Natural killer cell (primary cell): ENCODE measurements at regions of chr12 and their contacts with region 1.

Region 1: DNA sequence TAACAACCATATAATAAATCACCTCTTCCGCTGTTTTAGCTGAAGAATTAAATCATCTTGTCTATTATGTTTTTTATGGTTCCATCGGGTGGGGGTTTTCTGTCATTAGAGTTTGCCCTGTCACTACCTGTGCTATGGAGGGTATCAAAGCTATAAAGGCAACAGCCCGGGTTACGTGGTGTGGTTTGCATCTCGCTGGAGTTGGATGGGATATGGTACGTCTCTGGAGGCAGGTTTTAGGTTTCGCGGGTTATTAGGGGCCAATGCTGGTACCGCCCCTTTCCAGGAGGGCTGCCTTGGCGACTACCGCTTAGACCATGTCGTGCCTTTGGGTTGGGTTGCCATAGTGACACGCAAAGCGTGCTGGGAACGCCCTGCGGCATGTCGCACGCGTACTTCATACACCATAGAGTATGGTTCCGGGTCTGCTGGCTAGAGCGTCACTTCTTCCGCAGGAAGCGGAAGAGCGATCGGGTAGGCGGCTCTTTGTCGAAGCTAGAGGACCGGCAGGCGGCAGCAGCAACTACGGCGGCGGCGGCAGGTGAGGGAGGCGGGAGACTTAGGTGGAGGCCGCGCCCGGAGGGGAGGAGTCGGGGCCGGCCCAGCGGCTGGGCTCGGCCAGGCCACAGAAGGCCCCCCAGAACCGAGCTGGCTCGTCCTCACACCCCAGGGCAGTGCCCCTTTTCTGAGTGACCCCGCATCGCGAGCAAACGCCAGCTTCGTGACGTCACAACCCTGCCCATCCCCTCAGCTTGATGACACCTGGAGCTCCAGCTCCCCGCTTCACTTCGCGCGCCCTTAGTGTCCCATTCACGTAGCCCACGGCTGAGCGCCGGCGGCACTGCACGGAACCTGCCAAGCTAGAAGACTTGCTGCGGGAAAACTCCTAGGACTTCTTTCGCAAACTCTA is at the start of gene ZC3H10:
- DNase-seq: peak; percentile 93 to 99
- ATAC-seq: peak; percentile 78 to 93 (median 82)
- H3K4me3 ChIP-seq: peak within 1 kb of the TSS; percentile 78
- H3K4me3 Mint-ChIP-seq: peak within 1 kb of the TSS; percentile 98
- H3K27ac ChIP-seq: peak within 1 kb of the TSS; percentile 90
- H3K27ac Mint-ChIP-seq: peak within 1 kb of the TSS; percentile 95 to 99
- H3K4me1 ChIP-seq: peaks cover 28% of the 10 kb centered on the region
- H3K4me1 Mint-ChIP-seq: peaks cover 33% of the 10 kb centered on the region in 2 donors
- H3K27me3 ChIP-seq: no peaks in the 10 kb centered on the region
- H3K27me3 Mint-ChIP-seq: no peaks in the 10 kb centered on the region
- CTCF ChIP-seq: peak; percentile 47
- total RNA-seq, gene ZC3H10: 12.0 to 24.3 (median 16.2) TPM

Region 2: DNA sequence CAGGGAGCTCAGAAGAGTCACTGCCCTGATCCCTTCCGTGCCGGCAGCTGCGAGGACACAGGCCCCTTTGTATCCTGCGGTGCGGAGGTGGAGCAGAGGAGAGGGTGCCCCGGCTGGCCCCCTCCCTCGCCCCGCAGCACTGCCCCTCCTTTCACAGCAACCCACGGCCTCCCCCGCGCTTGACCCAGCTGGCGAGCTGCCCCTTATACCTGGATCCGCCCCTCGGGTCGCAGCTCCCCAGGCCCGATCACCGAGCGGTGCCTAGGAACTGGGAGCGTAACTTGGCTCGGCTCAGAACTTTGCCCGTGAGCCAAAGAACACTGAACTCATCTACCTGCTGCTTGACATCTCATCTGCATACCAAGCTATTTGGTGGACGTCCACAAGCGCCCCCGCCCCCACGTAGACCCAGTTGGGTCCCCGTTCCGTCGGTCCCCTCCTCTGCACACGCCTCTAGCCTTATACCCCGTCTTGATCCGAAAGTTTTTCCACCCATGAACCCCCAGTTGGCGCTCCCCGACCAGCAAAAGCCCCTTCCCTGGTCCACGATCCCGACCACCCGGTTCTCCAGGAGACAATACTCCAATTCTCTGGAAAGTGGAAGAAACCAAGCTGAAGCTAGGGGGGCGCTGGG is 287.9 kb before region 1 on chr12:
- intact Hi-C with region 1: loop called (anchors 1 kb)
- DNase-seq: peak; percentile 28 to 59
- ATAC-seq: peak in 1 of 3 donors; percentile 11
- H3K4me3 ChIP-seq: peak overlapping the region; percentile 68
- H3K4me3 Mint-ChIP-seq: peak overlapping the region; percentile 99
- H3K27ac ChIP-seq: peak overlapping the region; percentile 61
- H3K27ac Mint-ChIP-seq: peak overlapping the region; percentile 91 to 95
- H3K4me1 ChIP-seq: peaks cover 49% of the 10 kb centered on the region
- H3K4me1 Mint-ChIP-seq: peaks cover 44 to 56% of the 10 kb centered on the region in 2 donors
- H3K27me3 ChIP-seq: no peaks in the 10 kb centered on the region
- H3K27me3 Mint-ChIP-seq: no peaks in the 10 kb centered on the region
- CTCF ChIP-seq: no peak

Region 3: GRCh38 chr12:56041552-56042429 is 76.2 kb before region 1 on chr12 and contains the start of gene RPS26:
- intact Hi-C with region 1: loop called (anchors 5 kb)
- DNase-seq: peak; percentile 85 to 99
- ATAC-seq: peak; percentile 89 to 97 (median 93)
- H3K4me3 ChIP-seq: peak within 1 kb of the TSS; percentile 83
- H3K4me3 Mint-ChIP-seq: peak within 1 kb of the TSS; percentile 99
- H3K27ac ChIP-seq: peak within 1 kb of the TSS; percentile 86
- H3K27ac Mint-ChIP-seq: peak within 1 kb of the TSS; percentile 93 to 98
- H3K4me1 ChIP-seq: peaks cover 14% of the 10 kb centered on the region
- H3K4me1 Mint-ChIP-seq: peaks cover 24 to 25% of the 10 kb centered on the region in 2 donors
- H3K27me3 ChIP-seq: no peaks in the 10 kb centered on the region
- H3K27me3 Mint-ChIP-seq: no peaks in the 10 kb centered on the region
- CTCF ChIP-seq: no peak
- total RNA-seq, gene RPS26: 29.5 to 50.3 (median 35.5) TPM

Region 4: GRCh38 chr12:56127888-56128669 is 10.0 kb after region 1 on chr12 and contains the start of gene ESYT1:
- intact Hi-C with region 1: loop called (anchors 1 kb)
- DNase-seq: peak; percentile 91 to 100
- ATAC-seq: peak; percentile 87 to 96 (median 90)
- H3K4me3 ChIP-seq: peak within 1 kb of the TSS; percentile 90
- H3K4me3 Mint-ChIP-seq: peak within 1 kb of the TSS; percentile 97
- H3K27ac ChIP-seq: peak within 1 kb of the TSS; percentile 85
- H3K27ac Mint-ChIP-seq: peak within 1 kb of the TSS; percentile 88 to 93
- H3K4me1 ChIP-seq: peaks cover 45% of the 10 kb centered on the region
- H3K4me1 Mint-ChIP-seq: peaks cover 52 to 68% of the 10 kb centered on the region in 2 donors
- H3K27me3 ChIP-seq: no peaks in the 10 kb centered on the region
- H3K27me3 Mint-ChIP-seq: no peaks in the 10 kb centered on the region
- CTCF ChIP-seq: no peak
- total RNA-seq, gene ESYT1: 198 to 215 (median 199) TPM

Region 5: DNA sequence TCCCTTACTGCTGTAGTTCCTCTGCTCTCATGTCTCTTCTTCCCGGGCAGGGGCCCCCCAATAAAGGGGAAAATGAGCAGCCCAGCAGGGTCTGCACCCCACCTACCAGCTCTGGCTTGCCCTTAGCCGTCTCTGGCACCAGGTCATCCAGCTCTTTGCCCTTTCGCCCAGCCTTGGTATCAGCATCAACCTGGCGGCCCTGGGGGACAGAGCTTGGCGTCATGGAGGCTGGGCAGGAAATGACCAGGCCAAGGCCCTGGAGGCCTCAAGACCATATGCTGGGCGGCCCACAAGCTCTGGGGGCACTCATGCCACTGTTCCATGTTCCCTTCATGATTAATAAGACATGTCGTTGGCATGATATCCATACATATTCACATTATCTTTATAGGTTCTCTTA is 54.8 kb after region 1 on chr12:
- intact Hi-C with region 1: no loop called
- DNase-seq: no peak
- ATAC-seq: no peak
- H3K4me3 ChIP-seq: no peak overlapping the region
- H3K4me3 Mint-ChIP-seq: no peak overlapping the region
- H3K27ac ChIP-seq: no peak overlapping the region
- H3K27ac Mint-ChIP-seq: no peak overlapping the region
- H3K4me1 ChIP-seq: no peaks in the 10 kb centered on the region
- H3K4me1 Mint-ChIP-seq: no peaks in the 10 kb centered on the region
- H3K27me3 ChIP-seq: no peaks in the 10 kb centered on the region
- H3K27me3 Mint-ChIP-seq: no peaks in the 10 kb centered on the region
- CTCF ChIP-seq: no peak

Region 6: DNA sequence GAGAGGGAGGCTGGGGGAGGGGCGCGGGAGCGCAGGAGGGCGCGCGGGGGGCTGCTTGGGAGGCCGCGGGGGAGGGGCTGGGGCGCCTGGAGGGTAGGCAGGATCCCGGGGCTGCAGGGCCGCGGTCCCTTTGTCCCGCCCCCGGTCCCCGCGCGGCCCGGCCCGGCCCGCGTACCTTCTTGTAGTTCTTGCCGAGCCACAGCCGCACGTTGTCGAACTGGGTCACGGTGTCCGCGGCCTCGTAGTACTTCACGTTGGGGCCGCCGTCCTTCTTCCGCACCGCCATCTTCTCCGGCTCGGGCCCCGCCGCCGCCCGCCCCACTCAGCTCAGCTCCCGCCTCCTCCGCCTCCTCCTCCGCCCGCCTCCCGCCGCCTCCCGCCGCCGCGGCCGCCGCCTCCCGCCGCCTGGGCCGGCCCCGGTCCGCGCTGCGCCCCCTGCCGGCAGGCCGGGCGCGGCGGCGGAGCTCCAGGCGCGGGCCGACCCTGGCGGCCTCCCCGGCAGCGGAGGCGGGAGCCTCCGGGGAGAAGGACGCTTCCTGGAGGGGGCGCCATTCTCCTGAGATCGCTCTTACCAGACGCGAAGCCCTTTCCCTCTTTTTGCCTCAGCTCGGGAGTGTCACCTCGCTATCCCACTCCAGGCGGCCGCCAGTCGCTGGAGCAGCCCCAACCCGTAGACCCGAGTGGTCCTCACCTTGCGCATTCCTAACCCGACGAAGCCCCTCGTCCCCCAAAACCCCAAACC is 71.3 kb after region 1 on chr12 and contains the start of gene SMARCC2:
- intact Hi-C with region 1: loop called (anchors 2 kb)
- DNase-seq: peak; percentile 83 to 94
- ATAC-seq: peak; percentile 81 to 94 (median 83)
- H3K4me3 ChIP-seq: peak within 1 kb of the TSS; percentile 96
- H3K4me3 Mint-ChIP-seq: peak within 1 kb of the TSS; percentile 99
- H3K27ac ChIP-seq: peak within 1 kb of the TSS; percentile 96
- H3K27ac Mint-ChIP-seq: peak within 1 kb of the TSS; percentile 98
- H3K4me1 ChIP-seq: peaks cover 27% of the 10 kb centered on the region
- H3K4me1 Mint-ChIP-seq: peaks cover 43 to 55% of the 10 kb centered on the region in 2 donors
- H3K27me3 ChIP-seq: no peaks in the 10 kb centered on the region
- H3K27me3 Mint-ChIP-seq: no peaks in the 10 kb centered on the region
- CTCF ChIP-seq: peak; percentile 66
- total RNA-seq, gene SMARCC2: 205 to 232 (median 210) TPM

Region 7: DNA sequence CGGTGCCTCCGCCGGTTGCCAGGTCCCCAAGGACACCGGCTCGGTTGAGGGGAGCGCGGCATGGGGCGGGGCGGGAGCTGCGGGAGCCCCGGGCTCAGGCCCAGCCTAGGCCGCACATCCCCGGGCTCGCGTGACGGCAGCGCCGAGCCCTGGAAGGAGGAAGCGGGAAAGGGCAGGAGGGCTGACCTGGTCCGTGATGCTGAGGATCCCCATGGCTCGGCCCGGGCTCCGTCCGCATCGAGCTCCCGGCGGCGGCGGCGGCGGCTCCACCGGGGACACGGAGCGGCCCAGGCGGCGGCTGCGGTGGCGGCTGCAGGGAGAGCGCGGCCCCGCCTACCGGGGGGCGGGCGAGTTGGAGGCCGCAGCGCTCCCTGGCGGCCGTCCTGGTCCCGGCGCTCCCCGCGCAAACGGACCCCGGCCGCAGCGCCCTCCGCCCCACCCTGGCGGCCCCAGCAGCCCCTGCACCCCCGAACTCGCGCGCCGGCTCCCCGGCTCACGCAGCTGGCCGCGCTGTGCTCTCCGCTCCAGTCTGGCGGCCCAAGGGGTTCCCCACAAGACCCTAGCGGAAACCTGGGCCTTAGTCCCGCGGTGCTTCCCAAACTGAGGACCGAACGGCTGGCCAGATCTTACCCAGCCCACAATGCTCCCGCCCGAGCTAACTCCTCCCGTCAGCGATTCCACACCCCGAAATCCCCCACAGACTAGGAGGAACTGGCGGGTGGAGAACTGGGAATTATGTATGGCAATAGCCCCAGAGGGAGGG is 140.2 kb after region 1 on chr12 and contains the start of gene ANKRD52:
- intact Hi-C with region 1: loop called (anchors 2 kb)
- DNase-seq: peak; percentile 84 to 93
- ATAC-seq: peak; percentile 97 to 98 (median 97)
- H3K4me3 ChIP-seq: peak within 1 kb of the TSS; percentile 75
- H3K4me3 Mint-ChIP-seq: peak within 1 kb of the TSS; percentile 94
- H3K27ac ChIP-seq: peak within 1 kb of the TSS; percentile 63
- H3K27ac Mint-ChIP-seq: peak within 1 kb of the TSS; percentile 80 to 88
- H3K4me1 ChIP-seq: peaks cover 24% of the 10 kb centered on the region
- H3K4me1 Mint-ChIP-seq: peaks cover 8 to 26% of the 10 kb centered on the region in 2 donors
- H3K27me3 ChIP-seq: no peaks in the 10 kb centered on the region
- H3K27me3 Mint-ChIP-seq: no peaks in the 10 kb centered on the region
- CTCF ChIP-seq: peak; percentile 82
- total RNA-seq, gene ANKRD52: 34.1 to 52.2 (median 51.4) TPM

Region 8: DNA sequence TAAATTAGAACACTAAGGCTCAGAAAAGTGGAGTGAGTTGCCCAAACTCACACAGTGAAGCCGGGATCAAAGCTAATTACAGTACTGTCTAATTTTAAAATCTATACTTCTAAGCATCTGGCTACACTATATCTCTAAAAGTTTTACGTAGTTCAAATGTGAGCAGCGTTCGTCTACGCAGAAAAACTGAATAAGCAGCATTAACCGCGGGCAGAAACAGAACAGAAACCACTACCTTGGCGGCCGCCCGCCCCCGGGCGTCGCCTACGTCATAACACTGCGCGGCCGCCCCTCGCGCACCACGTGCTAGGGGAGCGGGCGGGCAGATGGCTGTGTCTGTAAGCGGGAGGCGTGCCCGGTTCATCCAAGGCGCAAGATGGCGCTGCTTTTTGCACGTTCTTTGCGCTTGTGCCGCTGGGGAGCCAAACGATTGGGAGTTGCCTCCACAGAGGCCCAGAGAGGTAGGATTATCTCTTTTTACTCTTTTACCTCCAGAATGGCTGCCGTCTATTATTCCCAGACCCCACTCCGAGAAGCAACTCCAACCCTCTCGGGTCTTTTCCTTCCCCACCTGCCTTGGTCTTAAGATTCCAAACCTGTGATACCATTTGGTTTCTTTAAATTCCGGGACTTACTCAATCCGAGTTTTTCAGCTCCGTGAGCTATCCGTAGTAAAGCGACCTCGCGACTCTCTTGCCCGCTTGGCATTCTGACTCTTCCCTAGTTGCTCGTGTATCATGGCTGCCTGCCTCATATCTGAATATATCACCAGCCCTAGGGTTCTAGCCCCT is 350.4 kb after region 1 on chr12 and contains the start of gene SPRYD4:
- intact Hi-C with region 1: loop called (anchors 2 kb)
- DNase-seq: peak; percentile 93 to 97
- ATAC-seq: peak; percentile 91 to 98 (median 97)
- H3K4me3 ChIP-seq: peak within 1 kb of the TSS; percentile 80
- H3K4me3 Mint-ChIP-seq: peak within 1 kb of the TSS; percentile 95
- H3K27ac ChIP-seq: peak within 1 kb of the TSS; percentile 92
- H3K27ac Mint-ChIP-seq: peak within 1 kb of the TSS; percentile 94
- H3K4me1 ChIP-seq: peaks cover 20% of the 10 kb centered on the region
- H3K4me1 Mint-ChIP-seq: peaks cover 22 to 25% of the 10 kb centered on the region in 2 donors
- H3K27me3 ChIP-seq: no peaks in the 10 kb centered on the region
- H3K27me3 Mint-ChIP-seq: no peaks in the 10 kb centered on the region
- CTCF ChIP-seq: no peak
- total RNA-seq, gene SPRYD4: 5.6 to 6.2 (median 5.6) TPM